ENCODE measurements at regions of chr1 and their contacts with region 1.

Region 1: GRCh38 chr1:54464482-54465146 is 58.4 kb upstream of the SSBP3 start:
- DNase-seq: peak; percentile 66
- H3K4me3 ChIP-seq: no peak overlapping the region
- H3K27ac ChIP-seq: peak overlapping the region; percentile 74
- H3K4me1 ChIP-seq: peaks cover 37% of the 10 kb centered on the region
- H3K27me3 ChIP-seq: no peaks in the 10 kb centered on the region
- CTCF ChIP-seq: no peak
- POLR2A ChIP-seq: no peak

Region 2: DNA sequence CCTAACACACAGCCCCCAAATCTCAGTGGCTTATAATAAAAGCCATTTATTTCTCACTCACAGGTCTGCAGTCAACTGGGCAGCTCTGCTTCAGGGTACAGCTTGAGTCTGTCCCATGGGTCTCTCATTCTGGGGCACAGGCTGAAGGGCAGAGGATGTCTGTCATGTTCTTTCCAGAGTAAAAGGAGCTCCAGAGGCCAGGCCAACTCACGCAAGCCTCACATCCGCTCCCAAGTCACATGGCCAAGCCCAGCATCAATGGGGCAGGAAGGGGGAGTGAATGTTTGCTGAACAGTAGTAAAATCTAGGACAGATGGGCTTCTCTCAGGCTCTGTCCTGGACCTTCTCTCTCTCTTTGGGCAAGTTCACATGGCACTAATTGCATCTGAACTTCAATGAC is 51.3 kb before region 1 on chr1:
- CTCF ChIA-PET with region 1: interaction called, 4 read pairs
- POLR2A ChIA-PET with region 1: interaction called, 4 read pairs
- dilution Hi-C with region 1: no loop called
- intact Hi-C with region 1: loop called (anchors 2 kb)
- DNase-seq: peak; percentile 72
- H3K4me3 ChIP-seq: no peak overlapping the region
- H3K27ac ChIP-seq: peak overlapping the region; percentile 58
- H3K4me1 ChIP-seq: peaks cover 19% of the 10 kb centered on the region
- H3K27me3 ChIP-seq: peaks cover 0 to 2% of the 10 kb centered on the region in 2 experiments
- CTCF ChIP-seq: no peak
- POLR2A ChIP-seq: peak; percentile 67

Region 3: GRCh38 chr1:54480525-54480848 is 15.9 kb after region 1 on chr1:
- CTCF ChIA-PET with region 1: interaction called, 10 read pairs
- POLR2A ChIA-PET with region 1: no interaction called
- dilution Hi-C with region 1: no loop called
- intact Hi-C with region 1: no loop called
- DNase-seq: no peak
- H3K4me3 ChIP-seq: no peak overlapping the region
- H3K27ac ChIP-seq: no peak overlapping the region
- H3K4me1 ChIP-seq: no peaks in the 10 kb centered on the region
- H3K27me3 ChIP-seq: no peaks in the 10 kb centered on the region
- CTCF ChIP-seq: no peak
- POLR2A ChIP-seq: no peak

Region 4: GRCh38 chr1:54547601-54548388 is 83.2 kb after region 1 on chr1 and contains the start of gene ACOT11:
- CTCF ChIA-PET with region 1: no interaction called
- POLR2A ChIA-PET with region 1: no interaction called
- dilution Hi-C with region 1: no loop called
- intact Hi-C with region 1: no loop called
- DNase-seq: no peak
- H3K4me3 ChIP-seq: no peak within 1 kb of the TSS
- H3K27ac ChIP-seq: no peak within 1 kb of the TSS
- H3K4me1 ChIP-seq: peaks cover 10% of the 10 kb centered on the region
- H3K27me3 ChIP-seq: no peaks in the 10 kb centered on the region
- CTCF ChIP-seq: peak; percentile 16 to 29
- POLR2A ChIP-seq: no peak
- total RNA-seq, gene ACOT11: 5.4 and 5.7 TPM in 2 replicates

Region 5: DNA sequence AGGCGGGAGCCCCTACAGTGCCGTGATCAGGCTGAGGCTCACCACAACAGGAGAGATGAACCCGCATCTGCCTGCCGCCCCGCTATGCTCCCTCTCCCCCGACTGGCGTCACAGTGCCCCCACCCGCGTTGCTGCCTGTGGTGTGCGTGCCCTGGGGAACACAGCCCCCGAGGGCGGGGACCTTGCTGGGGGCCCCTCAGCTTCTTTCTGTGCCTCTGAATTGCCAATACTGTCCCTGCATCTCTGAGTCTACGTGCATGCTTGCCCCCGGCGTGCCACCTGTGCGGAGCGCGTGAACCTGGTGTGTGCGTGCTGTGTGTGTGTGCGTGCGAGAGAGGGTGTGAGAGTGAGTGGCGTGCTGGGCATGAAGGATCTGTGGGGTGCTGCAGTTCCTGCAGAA is 289.4 kb after region 1 on chr1:
- CTCF ChIA-PET with region 1: no interaction called
- POLR2A ChIA-PET with region 1: no interaction called
- dilution Hi-C with region 1: no loop called
- intact Hi-C with region 1: no loop called
- DNase-seq: no peak
- H3K4me3 ChIP-seq: no peak overlapping the region
- H3K27ac ChIP-seq: no peak overlapping the region
- H3K4me1 ChIP-seq: no peaks in the 10 kb centered on the region
- H3K27me3 ChIP-seq: no peaks in the 10 kb centered on the region
- CTCF ChIP-seq: no peak
- POLR2A ChIP-seq: no peak

Measured in endothelial cell of umbilical vein (primary cell).